Activated CD4-positive, alpha-beta T cell treated with anti-CD3 and anti-CD28 coated beads, Interleukin-2, amount 10 ng/mL, durations not matched to agents 7 days and 5 days (primary cell): ENCODE measurements at regions of chr22 and their contacts with region 1.

Region 1: GRCh38 chr22:40044102-40044869 is 49.5 kb downstream of the FAM83F start:
- DNase-seq: peak; percentile 99
- H3K4me3 Mint-ChIP-seq: peak overlapping the region; percentile 81
- H3K27ac Mint-ChIP-seq: peak overlapping the region; percentile 98
- H3K4me1 Mint-ChIP-seq: peaks cover 37% of the 10 kb centered on the region
- H3K27me3 Mint-ChIP-seq: peaks cover 7% of the 10 kb centered on the region

Region 2: GRCh38 chr22:39808081-39808480 is 236.2 kb before region 1 on chr22:
- CTCF ChIA-PET with region 1: no interaction called
- POLR2A ChIA-PET with region 1: no interaction called
- DNase-seq: no peak
- H3K4me3 Mint-ChIP-seq: no peak overlapping the region
- H3K27ac Mint-ChIP-seq: no peak overlapping the region
- H3K4me1 Mint-ChIP-seq: peaks cover 31% of the 10 kb centered on the region
- H3K27me3 Mint-ChIP-seq: peaks cover 6% of the 10 kb centered on the region

Region 3: DNA sequence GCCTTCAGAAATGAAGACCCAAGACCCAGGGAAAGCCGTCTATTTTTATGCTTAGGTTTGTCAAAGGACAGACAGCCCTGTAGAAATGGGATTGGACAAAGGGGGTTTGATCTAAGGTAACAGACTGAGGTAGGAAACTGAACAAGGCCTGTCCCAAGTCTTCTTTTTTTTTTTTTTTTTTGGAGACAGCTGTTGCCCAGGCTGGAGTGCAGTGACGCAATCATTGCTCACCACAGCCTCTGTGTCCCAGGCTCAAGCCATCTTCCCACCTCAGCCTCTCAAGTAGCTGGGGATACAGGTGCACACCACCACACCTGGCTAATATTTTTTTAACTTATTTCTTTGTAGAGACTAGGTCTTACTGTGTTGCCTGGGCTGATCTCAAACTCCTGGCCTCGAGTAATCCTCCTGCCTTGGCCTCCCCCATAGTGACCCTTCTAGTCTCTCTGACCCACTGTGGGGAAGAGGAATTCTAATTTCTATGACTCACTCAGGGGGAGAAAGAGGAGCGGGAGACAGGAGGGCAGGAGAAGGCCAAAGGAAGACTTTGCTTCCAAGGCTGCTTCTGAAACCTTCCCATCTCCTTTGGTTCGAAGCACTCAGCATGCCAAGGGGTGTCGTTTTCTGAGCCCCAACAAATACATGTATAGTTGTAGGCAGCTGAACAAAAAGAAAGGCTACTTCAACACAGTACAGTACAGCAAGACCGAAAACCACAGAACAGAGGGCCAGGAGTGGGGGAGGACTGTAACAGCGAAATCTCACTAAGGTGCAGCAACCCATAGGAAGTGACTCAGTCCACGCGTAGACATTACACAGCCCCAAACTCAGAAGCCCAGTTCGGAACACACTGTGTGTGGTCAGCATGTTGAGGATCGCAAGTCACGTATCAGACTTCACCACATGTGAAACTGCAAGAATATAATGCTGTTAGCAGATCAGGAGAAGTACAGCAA is 83.2 kb before region 1 on chr22:
- CTCF ChIA-PET with region 1: no interaction called
- POLR2A ChIA-PET with region 1: no interaction called
- DNase-seq: peak; percentile 72
- H3K4me3 Mint-ChIP-seq: peak overlapping the region; percentile 46
- H3K27ac Mint-ChIP-seq: peak overlapping the region; percentile 83
- H3K4me1 Mint-ChIP-seq: peaks cover 65% of the 10 kb centered on the region
- H3K27me3 Mint-ChIP-seq: no peaks in the 10 kb centered on the region

Region 4: DNA sequence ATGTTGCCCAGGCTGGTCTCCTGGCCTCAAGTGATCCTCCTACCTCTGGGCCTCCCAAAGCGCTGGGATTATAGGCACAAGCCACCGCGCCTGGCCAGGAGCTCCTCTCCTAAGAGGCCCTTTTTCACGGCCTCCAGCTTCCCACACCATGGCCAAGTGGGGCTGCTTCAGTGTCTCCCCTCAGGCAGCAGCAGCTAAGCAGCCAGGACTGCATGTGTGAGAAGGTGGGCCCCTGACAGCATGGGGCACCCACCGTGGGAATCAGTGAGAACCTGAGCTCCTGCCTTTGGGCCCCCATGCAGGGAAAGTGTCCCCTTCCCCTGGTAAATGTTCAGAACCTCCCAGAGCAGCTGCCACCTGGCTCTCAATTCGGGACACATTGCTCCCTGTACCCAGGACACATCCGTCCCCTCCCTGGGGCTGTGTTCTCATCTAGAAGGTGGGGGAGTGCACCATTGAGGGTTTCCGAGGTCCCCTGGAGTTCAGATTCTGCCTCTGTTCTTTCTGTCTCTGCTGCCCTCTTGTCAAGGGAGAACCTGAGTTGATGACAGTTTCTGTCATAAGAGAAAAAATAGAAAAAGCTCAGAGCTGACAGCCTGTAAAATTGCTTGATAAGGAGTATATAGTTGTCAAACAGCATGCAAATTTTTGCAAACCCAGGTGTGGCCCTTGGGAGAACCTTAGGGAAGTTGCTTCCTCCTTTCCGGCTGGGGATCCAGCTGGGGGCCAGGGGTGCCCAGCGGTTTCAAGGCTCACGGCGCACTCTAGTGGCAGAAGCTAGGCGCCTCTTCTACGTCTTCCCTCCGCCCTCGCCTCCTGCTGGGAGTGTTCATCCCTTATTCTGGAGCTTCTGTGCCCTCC is 19.9 kb before region 1 on chr22:
- CTCF ChIA-PET with region 1: interaction called, 13 read pairs
- POLR2A ChIA-PET with region 1: no interaction called
- DNase-seq: peak; percentile 68
- H3K4me3 Mint-ChIP-seq: no peak overlapping the region
- H3K27ac Mint-ChIP-seq: no peak overlapping the region
- H3K4me1 Mint-ChIP-seq: peaks cover 5% of the 10 kb centered on the region
- H3K27me3 Mint-ChIP-seq: no peaks in the 10 kb centered on the region

Region 5: DNA sequence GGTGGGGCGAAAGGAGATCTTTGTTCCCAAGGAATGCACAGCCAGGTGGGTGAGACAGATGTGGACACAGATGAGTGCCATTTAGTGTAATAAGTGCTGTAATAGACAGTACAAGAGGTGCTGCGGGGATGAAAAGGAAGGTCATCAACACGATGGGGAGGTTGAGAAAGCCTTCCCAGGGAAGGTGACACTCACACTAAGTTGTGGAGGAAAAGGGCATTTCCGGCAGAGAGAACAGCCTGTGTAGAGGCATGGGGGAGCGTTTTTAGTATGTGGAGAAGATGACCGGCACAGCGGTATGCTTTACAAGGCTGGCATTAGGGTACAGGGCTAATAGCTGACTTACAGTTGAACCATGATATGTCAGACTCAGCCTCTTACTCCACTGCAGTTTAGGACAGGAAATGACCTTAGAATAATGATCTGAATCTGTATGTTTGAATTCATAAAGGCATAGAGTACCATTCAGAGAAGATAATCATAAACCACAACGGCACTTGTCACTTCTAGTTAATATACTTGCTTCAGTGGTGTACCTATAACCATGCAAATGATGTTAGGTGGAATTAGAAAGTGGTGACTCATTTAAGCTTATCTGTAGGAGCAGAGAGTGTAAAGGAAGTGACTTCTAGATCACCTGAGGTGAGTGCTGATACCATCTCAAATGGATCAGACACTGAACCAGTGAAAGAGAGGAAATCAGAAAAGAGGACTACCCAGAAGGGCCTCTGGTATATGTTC is 11.0 kb after region 1 on chr22:
- CTCF ChIA-PET with region 1: interaction called, 12 read pairs
- POLR2A ChIA-PET with region 1: interaction called, 3 read pairs
- DNase-seq: peak; percentile 49
- H3K4me3 Mint-ChIP-seq: peak overlapping the region; percentile 62
- H3K27ac Mint-ChIP-seq: peak overlapping the region; percentile 96
- H3K4me1 Mint-ChIP-seq: peaks cover 74% of the 10 kb centered on the region
- H3K27me3 Mint-ChIP-seq: no peaks in the 10 kb centered on the region

Region 6: GRCh38 chr22:40137132-40137531 is 92.8 kb after region 1 on chr22:
- CTCF ChIA-PET with region 1: no interaction called
- POLR2A ChIA-PET with region 1: no interaction called
- DNase-seq: no peak
- H3K4me3 Mint-ChIP-seq: no peak overlapping the region
- H3K27ac Mint-ChIP-seq: no peak overlapping the region
- H3K4me1 Mint-ChIP-seq: peaks cover 6% of the 10 kb centered on the region
- H3K27me3 Mint-ChIP-seq: no peaks in the 10 kb centered on the region

Region 7: GRCh38 chr22:40177738-40178416 is 133.6 kb after region 1 on chr22 and contains the start of gene TNRC6B:
- CTCF ChIA-PET with region 1: no interaction called
- POLR2A ChIA-PET with region 1: interaction called, 14 read pairs
- DNase-seq: peak; percentile 91
- H3K4me3 Mint-ChIP-seq: peak within 1 kb of the TSS; percentile 93
- H3K27ac Mint-ChIP-seq: peak within 1 kb of the TSS; percentile 89
- H3K4me1 Mint-ChIP-seq: peaks cover 49% of the 10 kb centered on the region
- H3K27me3 Mint-ChIP-seq: no peaks in the 10 kb centered on the region
- total RNA-seq, gene TNRC6B: 65.1 to 65.2 TPM

Region 8: GRCh38 chr22:40346178-40347118 is 302.2 kb after region 1 on chr22 and contains the start of gene ADSL:
- CTCF ChIA-PET with region 1: interaction called, 14 read pairs
- POLR2A ChIA-PET with region 1: interaction called, 7 read pairs
- DNase-seq: peak; percentile 87
- H3K4me3 Mint-ChIP-seq: peak within 1 kb of the TSS; percentile 98
- H3K27ac Mint-ChIP-seq: peak within 1 kb of the TSS; percentile 99
- H3K4me1 Mint-ChIP-seq: peaks cover 50% of the 10 kb centered on the region
- H3K27me3 Mint-ChIP-seq: no peaks in the 10 kb centered on the region
- total RNA-seq, gene ADSL: 124 to 130 TPM